Sigmoid colon (tissue), 7 donors: ENCODE measurements at regions of chr11 and their contacts with region 1.

Region 1: DNA sequence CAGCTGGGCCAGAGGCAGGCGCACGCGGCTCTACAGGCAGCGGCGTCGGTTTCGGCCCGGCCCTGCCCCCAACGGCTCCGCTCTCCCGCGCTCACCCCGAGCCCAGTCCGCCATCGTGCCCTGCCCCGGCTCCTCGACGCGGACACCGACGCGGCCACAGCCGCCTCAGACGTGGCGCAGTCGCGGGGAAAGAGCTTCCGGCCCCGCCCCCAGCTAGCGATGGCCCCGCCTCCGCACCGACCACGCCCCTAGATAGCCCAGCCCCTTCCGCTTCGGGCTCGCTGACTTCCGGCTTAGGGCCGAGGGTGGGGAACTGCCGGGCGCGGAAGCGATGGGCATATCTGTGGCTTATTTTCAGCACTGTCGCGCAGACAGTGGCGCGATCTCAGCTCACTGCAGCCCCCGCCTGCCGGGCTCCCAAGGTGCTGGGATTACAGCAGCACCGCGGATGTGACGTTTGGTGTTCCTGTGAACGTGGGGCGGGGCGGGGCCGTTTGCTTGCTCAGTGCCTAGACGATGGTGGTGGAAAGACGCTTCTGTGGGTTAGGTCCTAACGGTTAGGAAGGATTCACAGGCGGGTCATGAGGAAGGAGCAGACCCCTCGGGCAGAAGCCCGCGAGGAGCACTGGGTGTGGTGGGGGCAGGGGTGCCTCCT is at the starts of genes BET1L and RIC8A:
- DNase-seq: peak; percentile 99
- H3K4me3 ChIP-seq: peak within 1 kb of the TSS; percentile 85 to 98 (median 90)
- H3K27ac ChIP-seq: peak within 1 kb of the TSS; percentile 96 to 100 (median 98)
- H3K4me1 ChIP-seq: peaks cover 0 to 64% (median 47%) of the 10 kb centered on the region in 4 donors
- H3K27me3 ChIP-seq: no peaks in the 10 kb centered on the region
- CTCF ChIP-seq: no peak
- EP300 ChIP-seq: peak in 1 of 4 donors; percentile 65
- POLR2A ChIP-seq: peak; percentile 92 to 97
- total RNA-seq, gene BET1L: 22.8 to 29.6 (median 23.8) TPM
- total RNA-seq, gene RIC8A: 73.7 to 103 (median 86.8) TPM

Region 2: GRCh38 chr11:236774-237767 is 29.7 kb after region 1 on chr11 and contains the start of gene PSMD13:
- intact Hi-C with region 1: loop called (anchors 1 kb)
- DNase-seq: peak; percentile 90
- H3K4me3 ChIP-seq: peak within 1 kb of the TSS; percentile 83 to 96 (median 87)
- H3K27ac ChIP-seq: peak within 1 kb of the TSS; percentile 94 to 99 (median 95)
- H3K4me1 ChIP-seq: peaks cover 0 to 30% (median 25%) of the 10 kb centered on the region in 4 donors
- H3K27me3 ChIP-seq: no peaks in the 10 kb centered on the region
- CTCF ChIP-seq: peak in 1 of 4 experiments; percentile 8
- EP300 ChIP-seq: no peak
- POLR2A ChIP-seq: peak; percentile 6 to 32
- total RNA-seq, gene PSMD13: 86.2 to 118 (median 99.3) TPM

Region 3: GRCh38 chr11:250740-251299 is 43.5 kb after region 1 on chr11:
- intact Hi-C with region 1: no loop called
- DNase-seq: peak; percentile 72
- H3K4me3 ChIP-seq: no peak overlapping the region
- H3K27ac ChIP-seq: no peak overlapping the region
- H3K4me1 ChIP-seq: no peaks in the 10 kb centered on the region
- H3K27me3 ChIP-seq: no peaks in the 10 kb centered on the region
- CTCF ChIP-seq: peak; percentile 29 to 58 (median 46)
- EP300 ChIP-seq: no peak
- POLR2A ChIP-seq: no peak

Region 4: GRCh38 chr11:355581-356458 is 148.5 kb after region 1 on chr11:
- intact Hi-C with region 1: loop called (anchors 5 kb)
- DNase-seq: peak; percentile 99
- H3K4me3 ChIP-seq: peak overlapping the region; percentile 33 to 48 (median 46)
- H3K27ac ChIP-seq: peak overlapping the region; percentile 98 to 100 (median 100)
- H3K4me1 ChIP-seq: peaks cover 0 to 45% (median 37%) of the 10 kb centered on the region in 4 donors
- H3K27me3 ChIP-seq: peaks cover 0 to 16% (median 4%) of the 10 kb centered on the region in 3 donors
- CTCF ChIP-seq: no peak
- EP300 ChIP-seq: peak in 3 of 4 donors; percentile 70 to 75 (median 75)
- POLR2A ChIP-seq: peak; percentile 19 to 44

Region 5: DNA sequence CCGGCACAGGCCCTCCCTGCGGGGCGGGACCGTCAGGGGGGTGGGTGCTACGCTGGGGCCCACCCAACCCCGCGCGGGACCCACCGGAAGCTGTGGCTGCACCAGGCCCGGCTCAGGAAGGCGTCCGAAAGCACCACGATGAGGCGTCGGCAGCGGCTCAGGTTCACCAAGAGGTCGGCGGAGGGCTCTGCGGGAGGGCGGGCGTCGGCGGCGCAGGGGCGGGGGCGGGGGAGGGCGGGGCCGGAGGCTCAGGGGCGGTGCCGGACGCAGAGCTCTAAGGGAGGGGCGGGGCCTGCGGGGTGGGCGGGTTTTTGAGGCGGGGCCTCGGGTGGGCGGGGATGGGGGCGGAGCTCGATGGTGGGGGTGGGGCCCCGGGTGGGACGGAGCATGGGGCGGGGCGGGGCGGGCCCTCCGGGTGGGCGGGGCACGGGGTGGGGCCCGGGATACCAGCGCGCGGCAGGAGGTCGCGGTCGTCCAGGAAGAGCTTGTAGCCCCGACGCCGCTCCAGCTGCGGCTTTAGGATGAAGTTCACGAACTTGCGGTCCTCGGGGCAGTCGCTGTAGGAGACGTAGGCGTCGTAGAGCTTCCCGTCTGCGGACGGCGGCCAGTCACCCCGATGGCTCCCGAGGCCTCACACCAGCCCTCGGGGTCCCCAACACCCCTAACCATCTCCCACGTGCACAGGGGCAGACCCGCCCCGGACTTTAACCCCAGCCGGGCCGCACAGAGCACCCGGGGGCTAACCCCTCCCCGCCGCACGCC is 199.8 kb after region 1 on chr11:
- intact Hi-C with region 1: loop called (anchors 5 kb)
- DNase-seq: peak; percentile 91
- H3K4me3 ChIP-seq: peak overlapping the region; percentile 56 to 79 (median 62)
- H3K27ac ChIP-seq: peak overlapping the region; percentile 70 to 77 (median 74)
- H3K4me1 ChIP-seq: peaks cover 0 to 20% (median 19%) of the 10 kb centered on the region in 4 donors
- H3K27me3 ChIP-seq: peaks cover 0 to 8% (median 7%) of the 10 kb centered on the region in 3 donors
- CTCF ChIP-seq: no peak
- EP300 ChIP-seq: no peak
- POLR2A ChIP-seq: no peak

Region 6: GRCh38 chr11:506238-506994 is 299.1 kb after region 1 on chr11:
- intact Hi-C with region 1: loop called (anchors 5 kb)
- DNase-seq: peak; percentile 99
- H3K4me3 ChIP-seq: peak overlapping the region; percentile 70 to 94 (median 92)
- H3K27ac ChIP-seq: peak overlapping the region; percentile 97 to 100 (median 99)
- H3K4me1 ChIP-seq: peaks cover 0 to 54% (median 48%) of the 10 kb centered on the region in 4 donors
- H3K27me3 ChIP-seq: no peaks in the 10 kb centered on the region
- CTCF ChIP-seq: no peak
- EP300 ChIP-seq: peak in 2 of 4 donors; percentile 77 to 82
- POLR2A ChIP-seq: peak in 1 of 2 donors; percentile 59